ENCODE measurements at regions of chrX and their contacts with region 1.

Region 1: DNA sequence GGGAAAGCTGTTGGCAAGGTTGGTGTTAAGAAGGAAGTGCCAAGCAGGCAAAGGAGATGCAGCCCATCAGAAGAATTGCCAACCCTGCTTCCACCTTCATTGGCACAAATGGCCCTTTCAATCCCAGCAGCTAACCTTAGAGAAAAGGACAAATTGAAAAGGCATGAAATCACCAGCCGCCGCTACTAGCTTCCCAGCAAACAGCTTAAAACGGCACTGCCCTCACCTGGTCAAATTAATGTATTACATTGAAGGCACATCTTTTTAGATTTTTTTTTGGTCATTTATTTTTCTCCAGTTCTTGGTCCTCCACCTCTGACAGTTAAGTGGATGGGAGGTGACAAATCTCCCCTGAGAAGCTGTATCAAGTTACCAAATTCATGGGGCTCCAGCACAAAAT is 51.0 kb upstream of the NHSL2 start:
- DNase-seq: peak; percentile 67
- ATAC-seq: peak; percentile 45; the same call in 1 of the 2 replicates
- H3K4me3 ChIP-seq: no peak overlapping the region
- H3K27ac ChIP-seq: no peak overlapping the region
- H3K4me1 ChIP-seq: no peaks in the 10 kb centered on the region
- H3K27me3 ChIP-seq: peaks cover 24% of the 10 kb centered on the region; the same call in 1 of the 2 replicates
- CTCF ChIP-seq: peak; percentile 67

Region 2: GRCh38 chrX:71671043-71671780 is 188.4 kb before region 1 on chrX:
- CTCF ChIA-PET with region 1: no interaction called
- POLR2A ChIA-PET with region 1: no interaction called
- intact Hi-C with region 1: loop called (anchors 1 kb)
- DNase-seq: peak; percentile 21
- ATAC-seq: no peak; the same call in 1 of the 2 replicates
- H3K4me3 ChIP-seq: no peak overlapping the region
- H3K27ac ChIP-seq: no peak overlapping the region
- H3K4me1 ChIP-seq: peaks cover 12% of the 10 kb centered on the region
- H3K27me3 ChIP-seq: no peaks in the 10 kb centered on the region
- CTCF ChIP-seq: no peak

Region 3: DNA sequence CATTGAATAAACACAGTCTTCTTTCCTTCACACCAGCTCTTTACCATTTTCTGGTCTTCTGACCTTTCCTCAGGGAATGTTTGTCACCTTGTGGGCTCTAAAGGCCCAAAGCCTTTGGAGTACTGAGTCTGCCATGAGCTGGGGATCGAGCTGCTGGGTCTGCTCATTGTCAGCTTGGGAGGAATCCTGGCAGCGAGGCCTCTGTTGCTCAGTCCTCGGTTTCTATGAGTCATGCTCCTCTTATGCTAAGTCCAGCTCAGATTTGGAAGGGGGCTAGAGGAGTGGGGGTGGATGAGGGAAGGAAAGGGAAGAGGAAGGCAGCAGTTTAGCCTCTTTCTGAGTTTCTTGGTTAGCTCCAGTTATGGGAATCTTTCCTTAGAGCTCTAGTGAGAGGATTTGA is 82.1 kb after region 1 on chrX:
- CTCF ChIA-PET with region 1: no interaction called
- POLR2A ChIA-PET with region 1: no interaction called
- intact Hi-C with region 1: no loop called
- DNase-seq: peak; percentile 30
- ATAC-seq: peak; percentile 37; the same call in 1 of the 2 replicates
- H3K4me3 ChIP-seq: no peak overlapping the region
- H3K27ac ChIP-seq: no peak overlapping the region
- H3K4me1 ChIP-seq: no peaks in the 10 kb centered on the region
- H3K27me3 ChIP-seq: peaks cover 1% of the 10 kb centered on the region
- CTCF ChIP-seq: no peak